Calu3 (cell line): ENCODE measurements at regions of chr20 and their contacts with region 1.

Region 1: DNA sequence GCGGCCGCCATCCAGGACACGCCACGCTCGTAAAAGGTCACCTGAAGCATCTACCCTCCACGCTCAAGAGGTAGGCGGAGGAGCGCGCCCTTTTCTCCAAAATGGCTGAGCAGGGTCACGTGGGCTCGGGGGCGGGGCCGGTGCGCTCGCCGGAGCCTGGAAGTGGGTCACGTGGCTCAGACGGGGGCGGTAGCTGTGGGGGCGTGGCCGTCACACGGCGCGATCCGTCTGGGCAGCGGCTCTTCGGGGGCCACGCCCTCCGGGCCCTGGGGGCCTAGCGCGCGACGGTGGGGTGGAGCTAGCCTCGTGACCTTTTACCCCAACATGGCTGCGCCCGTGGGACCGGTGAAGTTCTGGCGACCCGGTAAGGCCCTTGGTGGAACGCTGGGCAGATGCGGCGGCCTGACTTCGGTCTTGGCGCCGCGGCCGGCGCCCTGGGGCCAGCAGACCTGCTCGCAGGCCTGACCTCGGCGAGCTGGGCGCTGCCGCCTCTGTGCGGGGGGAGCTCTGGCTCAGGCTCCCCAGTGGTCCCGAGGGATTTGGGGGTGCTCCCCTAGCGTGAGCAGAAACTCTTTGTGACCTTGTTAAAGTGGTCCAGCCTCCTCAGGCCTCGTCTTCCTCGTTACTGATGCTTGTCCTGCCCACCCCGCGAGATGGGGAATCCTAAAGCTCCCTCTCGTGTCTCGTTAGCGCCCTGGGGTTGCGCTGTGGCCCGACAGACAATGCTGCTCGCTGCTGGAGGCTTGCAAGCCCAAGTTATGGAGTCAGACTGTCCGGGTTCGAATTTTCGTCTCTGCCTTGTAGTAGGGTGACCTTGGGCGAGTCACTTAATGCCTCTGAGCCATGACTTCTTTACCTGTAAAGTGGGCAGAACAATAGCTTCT is at the start of gene DHX35:
- DNase-seq: peak; percentile 100
- H3K4me3 Mint-ChIP-seq: peak within 1 kb of the TSS; percentile 97
- H3K27ac Mint-ChIP-seq: peak within 1 kb of the TSS; percentile 95
- H3K4me1 Mint-ChIP-seq: peaks cover 21% of the 10 kb centered on the region
- H3K27me3 Mint-ChIP-seq: no peaks in the 10 kb centered on the region
- CTCF ChIP-seq: no peak
- total RNA-seq, gene DHX35: 18.9 and 19.1 TPM in 2 replicates

Region 2: GRCh38 chr20:38926142-38926933 is 35.9 kb before region 1 on chr20 and contains the start of gene FAM83D:
- CTCF ChIA-PET with region 1: interaction called, 14 read pairs
- intact Hi-C with region 1: no loop called
- DNase-seq: peak; percentile 100
- H3K4me3 Mint-ChIP-seq: peak within 1 kb of the TSS; percentile 78
- H3K27ac Mint-ChIP-seq: peak within 1 kb of the TSS; percentile 75
- H3K4me1 Mint-ChIP-seq: peaks cover 47% of the 10 kb centered on the region
- H3K27me3 Mint-ChIP-seq: peaks cover 5% of the 10 kb centered on the region
- CTCF ChIP-seq: no peak
- total RNA-seq, gene FAM83D: 73.0 and 84.0 TPM in 2 replicates

Region 3: DNA sequence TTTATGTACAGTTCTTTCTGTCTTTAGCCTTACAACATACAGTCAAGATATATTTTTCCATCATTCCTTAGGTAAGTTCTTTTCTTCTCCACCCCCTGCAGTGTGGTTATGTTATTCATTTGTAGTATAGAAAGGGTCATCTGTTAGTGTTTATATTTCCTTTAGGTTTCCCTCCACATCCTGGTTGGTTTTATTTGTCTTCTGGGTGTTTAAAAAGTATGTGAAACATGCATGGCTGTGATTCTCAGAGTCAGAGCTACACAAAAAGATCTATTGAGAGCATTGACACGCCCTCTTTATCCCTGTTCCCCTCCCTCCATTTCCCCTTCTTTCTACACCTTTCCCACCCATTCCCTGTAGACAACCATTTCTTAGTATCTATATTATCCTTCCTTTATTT is 20.0 kb after region 1 on chr20:
- CTCF ChIA-PET with region 1: interaction called, 4 read pairs
- intact Hi-C with region 1: loop called (anchors 1 kb)
- DNase-seq: peak; percentile 24
- H3K4me3 Mint-ChIP-seq: peak overlapping the region; percentile 43
- H3K27ac Mint-ChIP-seq: peak overlapping the region; percentile 73
- H3K4me1 Mint-ChIP-seq: peaks cover 41% of the 10 kb centered on the region
- H3K27me3 Mint-ChIP-seq: no peaks in the 10 kb centered on the region
- CTCF ChIP-seq: no peak

Region 4: DNA sequence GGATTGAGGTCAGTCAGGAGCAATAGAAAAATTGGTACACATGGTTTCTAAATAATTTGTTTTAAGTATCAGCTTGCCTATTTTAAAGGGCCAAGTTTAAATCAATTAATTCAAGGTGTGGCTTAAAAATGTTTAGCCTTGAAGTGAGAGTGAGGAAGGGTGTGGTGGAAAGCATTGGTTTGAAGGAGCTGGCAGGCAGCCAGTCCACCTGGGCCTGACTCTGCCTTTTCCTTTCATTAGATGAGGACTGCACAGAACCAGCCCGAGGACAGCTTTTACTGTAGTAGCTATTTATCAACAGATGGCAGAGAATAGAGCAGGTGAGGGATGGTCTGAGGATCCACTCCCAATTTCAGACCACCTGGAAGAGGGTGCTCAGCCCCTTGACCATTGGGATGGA is 42.2 kb after region 1 on chr20:
- CTCF ChIA-PET with region 1: interaction called, 19 read pairs
- intact Hi-C with region 1: no loop called
- DNase-seq: peak; percentile 87
- H3K4me3 Mint-ChIP-seq: no peak overlapping the region
- H3K27ac Mint-ChIP-seq: no peak overlapping the region
- H3K4me1 Mint-ChIP-seq: peaks cover 26% of the 10 kb centered on the region
- H3K27me3 Mint-ChIP-seq: no peaks in the 10 kb centered on the region
- CTCF ChIP-seq: no peak